Activated CD4-positive, alpha-beta memory T cell treated with anti-CD3 and anti-CD28 coated beads for 36 hours (primary cell): ENCODE measurements at regions of chr11 and their contacts with region 1.

Region 1: GRCh38 chr11:69427337-69427736 is 54.1 kb upstream of the LINC01488 start:
- DNase-seq: no peak
- H3K4me3 Mint-ChIP-seq: no peak overlapping the region
- H3K27ac Mint-ChIP-seq: no peak overlapping the region
- H3K4me1 Mint-ChIP-seq: peaks cover 12% of the 10 kb centered on the region
- H3K27me3 Mint-ChIP-seq: peaks cover 19% of the 10 kb centered on the region

Region 2: DNA sequence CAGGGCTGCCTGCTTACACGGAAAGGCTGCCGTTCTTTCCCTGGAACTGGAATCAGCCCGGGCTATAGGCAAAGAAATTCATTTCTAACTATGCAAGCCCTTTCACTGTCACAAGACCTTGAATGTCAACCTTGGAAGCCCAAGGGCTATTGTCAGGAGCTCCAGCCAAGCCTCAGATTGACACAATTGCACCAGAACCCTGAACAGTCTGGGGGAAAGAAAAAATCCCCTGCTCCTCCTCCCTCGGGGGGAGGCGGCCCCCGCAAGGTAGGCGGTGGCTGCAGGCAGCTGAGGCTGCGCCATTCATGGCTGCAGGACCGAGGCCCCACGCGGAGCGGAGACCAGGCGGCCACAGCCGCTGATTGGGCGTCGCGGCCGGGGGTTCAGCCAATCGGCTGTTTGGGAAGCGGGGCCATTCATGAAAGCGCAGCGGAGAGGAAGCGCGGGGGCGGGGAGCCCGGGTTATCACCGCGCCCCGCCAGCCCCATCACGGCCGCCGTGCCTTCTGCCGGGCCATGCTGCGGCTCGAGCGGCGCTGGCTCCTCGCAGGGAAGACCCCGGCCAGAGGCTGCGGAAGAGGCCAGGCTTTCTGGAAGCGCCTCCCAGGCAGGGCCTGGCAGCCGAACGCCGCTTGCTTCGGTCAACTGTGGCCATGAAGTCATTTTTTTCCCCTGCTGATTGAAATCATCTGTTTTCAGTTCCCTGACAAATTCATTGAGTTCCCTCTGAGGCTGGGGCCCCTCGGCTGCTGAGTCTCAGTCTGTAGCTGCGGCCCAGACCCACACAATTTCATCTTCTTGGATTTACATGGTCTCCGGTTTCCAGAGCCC is 16.0 kb after region 1 on chr11:
- CTCF ChIA-PET with region 1: interaction called, 3 read pairs
- POLR2A ChIA-PET with region 1: interaction called, 3 read pairs
- intact Hi-C with region 1: loop called (anchors 2 kb)
- DNase-seq: peak; percentile 84
- H3K4me3 Mint-ChIP-seq: peak overlapping the region; percentile 45
- H3K27ac Mint-ChIP-seq: no peak overlapping the region
- H3K4me1 Mint-ChIP-seq: peaks cover 13% of the 10 kb centered on the region
- H3K27me3 Mint-ChIP-seq: peaks cover 17% of the 10 kb centered on the region